PC-3 (cell line): ENCODE measurements at regions of chr9 and their contacts with region 1.

Region 1: GRCh38 chr9:94213511-94214124 is 45.5 kb upstream of the ZNF169 start:
- DNase-seq: peak; percentile 76
- ATAC-seq: peak; percentile 88
- H3K4me3 ChIP-seq: no peak overlapping the region
- H3K27ac ChIP-seq: no peak overlapping the region
- H3K4me1 ChIP-seq: no peaks in the 10 kb centered on the region
- H3K27me3 ChIP-seq: no peaks in the 10 kb centered on the region
- CTCF ChIP-seq: peak; percentile 80

Region 2: GRCh38 chr9:93955360-93956182 is 258.0 kb before region 1 on chr9:
- CTCF ChIA-PET with region 1: no interaction called
- POLR2A ChIA-PET with region 1: no interaction called
- intact Hi-C with region 1: no loop called
- DNase-seq: no peak
- ATAC-seq: no peak
- H3K4me3 ChIP-seq: no peak overlapping the region
- H3K27ac ChIP-seq: no peak overlapping the region
- H3K4me1 ChIP-seq: peaks cover 3% of the 10 kb centered on the region; the same call in 1 of the 2 replicates
- H3K27me3 ChIP-seq: peaks cover 17% of the 10 kb centered on the region
- CTCF ChIP-seq: no peak

Region 3: GRCh38 chr9:94014065-94014654 is 199.5 kb before region 1 on chr9:
- CTCF ChIA-PET with region 1: interaction called, 12 read pairs
- POLR2A ChIA-PET with region 1: no interaction called
- intact Hi-C with region 1: loop called (anchors 1 kb)
- DNase-seq: peak; percentile 56
- ATAC-seq: peak; percentile 52
- H3K4me3 ChIP-seq: no peak overlapping the region
- H3K27ac ChIP-seq: no peak overlapping the region
- H3K4me1 ChIP-seq: no peaks in the 10 kb centered on the region; the same call in 1 of the 2 replicates
- H3K27me3 ChIP-seq: no peaks in the 10 kb centered on the region
- CTCF ChIP-seq: peak; percentile 66